Panc1 (cell line): ENCODE measurements at regions of chr5 and their contacts with region 1.

Region 1: GRCh38 chr5:31711935-31712592 is 73.1 kb downstream of the PDZD2 start:
- DNase-seq: no peak
- ATAC-seq: no peak
- H3K4me3 ChIP-seq: no peak overlapping the region
- H3K27ac ChIP-seq: no peak overlapping the region
- H3K4me1 ChIP-seq: no peaks in the 10 kb centered on the region
- H3K27me3 ChIP-seq: 0 out of 2 replicates have a peak, but pooled peaks cover 2% of the 10 kb centered on the region
- CTCF ChIP-seq: no peak

Region 2: DNA sequence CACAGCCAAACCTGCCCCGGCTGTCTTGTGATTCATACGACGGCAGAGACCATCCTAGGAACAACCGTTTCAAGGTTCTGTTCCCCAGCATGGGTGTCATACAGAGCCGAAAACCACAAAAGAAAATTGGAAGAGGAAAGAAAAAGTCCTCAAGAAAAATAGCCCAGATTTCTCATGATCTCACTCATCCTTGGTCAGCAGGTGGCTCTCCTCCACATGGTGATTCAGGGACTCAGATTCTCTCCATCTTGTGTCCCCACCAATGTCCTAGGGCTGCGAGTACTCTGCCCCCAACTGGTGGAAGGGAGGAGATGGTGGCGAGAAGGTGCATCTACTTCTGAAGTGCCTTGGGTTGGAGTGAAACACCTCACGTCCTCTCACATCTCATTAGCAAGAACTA is 47.5 kb before region 1 on chr5:
- CTCF ChIA-PET with region 1: no interaction called
- POLR2A ChIA-PET with region 1: interaction called, 12 read pairs
- in situ Hi-C with region 1: no loop called
- intact Hi-C with region 1: no loop called
- DNase-seq: no peak
- ATAC-seq: peak; percentile 80; the same call in 1 of the 2 replicates
- H3K4me3 ChIP-seq: no peak overlapping the region
- H3K27ac ChIP-seq: no peak overlapping the region
- H3K4me1 ChIP-seq: no peaks in the 10 kb centered on the region
- H3K27me3 ChIP-seq: peaks cover 19% of the 10 kb centered on the region
- CTCF ChIP-seq: peak; percentile 66

Region 3: GRCh38 chr5:32394981-32395380 is 682.9 kb after region 1 on chr5:
- CTCF ChIA-PET with region 1: no interaction called
- POLR2A ChIA-PET with region 1: no interaction called
- in situ Hi-C with region 1: no loop called
- intact Hi-C with region 1: no loop called
- DNase-seq: no peak
- ATAC-seq: no peak
- H3K4me3 ChIP-seq: no peak overlapping the region
- H3K27ac ChIP-seq: no peak overlapping the region
- H3K4me1 ChIP-seq: no peaks in the 10 kb centered on the region
- H3K27me3 ChIP-seq: no peaks in the 10 kb centered on the region
- CTCF ChIP-seq: no peak